ENCODE measurements at regions of chr2 and their contacts with region 1.

Region 1: GRCh38 chr2:218292048-218293014 is at the start of gene TMBIM1:
- DNase-seq: peak; percentile 87
- ATAC-seq: peak; percentile 84
- H3K4me3 Mint-ChIP-seq: peak within 1 kb of the TSS; percentile 87
- H3K27ac Mint-ChIP-seq: peak within 1 kb of the TSS; percentile 91
- H3K4me1 Mint-ChIP-seq: peaks cover 53% of the 10 kb centered on the region
- H3K27me3 Mint-ChIP-seq: no peaks in the 10 kb centered on the region
- total RNA-seq, gene TMBIM1: 51.1 to 54.0 TPM

Region 2: GRCh38 chr2:218360447-218360846 is 68.1 kb after region 1 on chr2:
- CTCF ChIA-PET with region 1: interaction called, 8 read pairs
- POLR2A ChIA-PET with region 1: no interaction called
- intact Hi-C with region 1: loop called in 1 of 2 experiments (anchors 2 kb)
- DNase-seq: no peak
- ATAC-seq: no peak
- H3K4me3 Mint-ChIP-seq: no peak overlapping the region
- H3K27ac Mint-ChIP-seq: no peak overlapping the region
- H3K4me1 Mint-ChIP-seq: no peaks in the 10 kb centered on the region
- H3K27me3 Mint-ChIP-seq: no peaks in the 10 kb centered on the region

Region 3: DNA sequence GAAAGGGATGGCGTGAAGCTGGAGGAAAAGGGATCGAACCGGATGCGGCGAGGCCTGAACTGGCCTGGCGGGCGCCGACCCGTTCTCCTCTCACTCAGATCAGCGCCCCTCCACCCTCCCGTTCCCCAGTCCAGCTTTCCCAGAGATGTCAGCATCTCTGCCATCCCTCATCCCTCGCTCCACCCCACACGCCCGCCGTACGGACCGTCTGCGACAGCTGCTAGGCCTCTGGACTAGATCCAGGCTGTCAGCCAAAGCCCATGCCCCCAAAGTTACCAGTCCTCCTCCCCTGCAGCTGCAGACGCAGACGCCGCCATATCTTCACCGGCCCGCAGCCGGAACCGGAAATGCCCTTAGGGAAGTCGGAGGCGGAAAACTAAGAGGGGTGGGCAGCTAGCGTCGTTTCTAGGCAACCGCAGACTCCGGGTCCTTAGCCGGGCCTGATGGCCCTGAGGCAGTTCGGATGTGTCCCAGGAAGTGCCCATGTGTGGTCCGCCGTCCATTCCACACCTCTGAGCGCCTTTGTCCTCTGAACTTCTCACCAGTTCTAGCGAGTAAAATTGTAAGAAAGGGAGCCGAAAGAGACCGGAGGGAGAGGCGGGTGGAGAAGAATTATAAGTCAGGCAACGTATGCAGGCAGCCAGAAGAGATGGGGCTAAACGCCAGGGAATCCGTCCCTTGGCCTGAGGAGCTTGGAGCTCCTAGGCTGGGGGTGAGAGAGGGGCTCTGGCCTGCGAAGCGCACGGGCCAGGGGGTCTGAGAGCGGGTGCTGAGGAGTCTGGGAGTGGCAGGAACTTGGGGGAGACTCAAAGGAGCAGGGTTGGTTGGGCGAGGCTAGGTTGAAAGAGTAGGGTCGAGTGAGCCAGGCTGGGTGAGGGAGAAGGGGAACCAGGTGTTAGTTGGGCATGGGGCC is 379.6 kb after region 1 on chr2 and contains the starts of genes RNF25 and STK36:
- CTCF ChIA-PET with region 1: interaction called, 3 read pairs
- POLR2A ChIA-PET with region 1: no interaction called
- intact Hi-C with region 1: loop called in 1 of 2 experiments (anchors 5 kb)
- DNase-seq: peak; percentile 90
- ATAC-seq: peak; percentile 98
- H3K4me3 Mint-ChIP-seq: peak within 1 kb of the TSS; percentile 95
- H3K27ac Mint-ChIP-seq: peak within 1 kb of the TSS; percentile 87
- H3K4me1 Mint-ChIP-seq: peaks cover 22% of the 10 kb centered on the region
- H3K27me3 Mint-ChIP-seq: no peaks in the 10 kb centered on the region
- total RNA-seq, gene RNF25: 14.1 to 29.2 TPM
- total RNA-seq, gene STK36: 13.1 to 19.3 TPM